Caco-2 (cell line): ENCODE measurements at regions of chr19 and their contacts with region 1.

Region 1: DNA sequence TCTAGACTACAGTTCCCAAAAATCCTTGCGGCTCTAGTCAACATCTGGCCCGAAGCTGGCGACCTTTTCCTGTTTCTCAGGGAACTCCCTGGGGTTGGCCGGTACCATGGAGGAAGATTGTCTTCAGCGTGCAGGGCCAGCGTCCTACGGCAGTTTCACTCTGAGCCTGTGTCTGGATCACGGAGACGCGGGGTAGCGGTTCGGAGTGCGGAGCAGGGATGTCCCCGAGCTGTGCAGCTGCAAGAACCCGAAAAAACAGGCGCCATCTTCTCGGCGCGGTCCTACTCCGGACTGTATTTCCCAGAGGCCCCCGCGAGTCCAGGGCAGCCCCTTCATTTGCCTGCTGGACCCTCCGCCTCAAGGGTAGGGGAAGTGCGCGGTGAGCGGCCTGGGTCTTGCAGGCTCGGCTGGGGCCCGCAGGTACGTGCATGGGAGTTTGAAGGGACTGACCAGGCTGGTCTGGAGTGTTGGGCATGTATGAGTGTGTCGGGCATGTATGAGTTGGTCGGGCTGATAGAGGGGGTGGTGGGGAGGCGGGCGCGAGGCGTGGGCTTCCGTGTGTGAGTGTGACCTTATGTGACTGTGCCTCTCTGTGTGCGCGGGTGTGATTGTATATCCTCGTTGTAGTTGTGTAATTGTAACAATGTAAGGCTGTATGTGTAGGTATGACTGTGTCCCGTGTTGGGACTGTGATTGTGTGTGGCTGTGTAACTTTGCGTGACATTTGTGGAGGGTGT is at the start of gene ZNF383:
- DNase-seq: peak; percentile 94 to 96
- H3K4me3 ChIP-seq: peak within 1 kb of the TSS; percentile 88
- H3K4me3 Mint-ChIP-seq: peak within 1 kb of the TSS; percentile 86
- H3K27ac Mint-ChIP-seq: peak within 1 kb of the TSS; percentile 92
- H3K4me1 ChIP-seq: no peaks in the 10 kb centered on the region
- H3K4me1 Mint-ChIP-seq: peaks cover 11% of the 10 kb centered on the region
- H3K27me3 ChIP-seq: no peaks in the 10 kb centered on the region
- H3K27me3 Mint-ChIP-seq: no peaks in the 10 kb centered on the region
- CTCF ChIP-seq: no peak
- total RNA-seq, gene ZNF383: 4.4 and 5.5 TPM in 2 replicates

Region 2: DNA sequence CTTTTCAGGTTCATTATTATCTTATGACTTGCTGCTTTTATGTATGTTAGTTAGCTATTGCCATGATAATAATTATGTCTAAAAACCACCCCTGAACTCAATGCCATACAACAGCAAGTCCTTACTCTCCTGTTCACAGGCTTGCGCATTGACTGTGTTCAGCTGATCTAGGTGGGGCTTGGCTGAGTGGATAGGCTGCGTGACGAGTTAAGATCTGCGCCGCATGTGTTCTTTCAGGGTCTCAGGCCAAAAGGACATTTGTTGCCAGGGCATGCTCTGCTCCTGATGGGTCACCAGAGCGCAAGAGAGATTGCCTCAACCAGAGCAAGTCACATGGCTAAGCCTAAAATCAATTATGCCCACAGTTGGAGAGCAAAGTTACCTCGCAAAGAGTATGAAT is 301.0 kb before region 1 on chr19:
- CTCF ChIA-PET with region 1: no interaction called
- POLR2A ChIA-PET with region 1: no interaction called
- intact Hi-C with region 1: no loop called
- DNase-seq: no peak
- H3K4me3 ChIP-seq: no peak overlapping the region
- H3K4me3 Mint-ChIP-seq: peak overlapping the region; percentile 69
- H3K27ac Mint-ChIP-seq: no peak overlapping the region
- H3K4me1 ChIP-seq: no peaks in the 10 kb centered on the region
- H3K4me1 Mint-ChIP-seq: no peaks in the 10 kb centered on the region
- H3K27me3 ChIP-seq: no peaks in the 10 kb centered on the region
- H3K27me3 Mint-ChIP-seq: no peaks in the 10 kb centered on the region
- CTCF ChIP-seq: no peak

Region 3: DNA sequence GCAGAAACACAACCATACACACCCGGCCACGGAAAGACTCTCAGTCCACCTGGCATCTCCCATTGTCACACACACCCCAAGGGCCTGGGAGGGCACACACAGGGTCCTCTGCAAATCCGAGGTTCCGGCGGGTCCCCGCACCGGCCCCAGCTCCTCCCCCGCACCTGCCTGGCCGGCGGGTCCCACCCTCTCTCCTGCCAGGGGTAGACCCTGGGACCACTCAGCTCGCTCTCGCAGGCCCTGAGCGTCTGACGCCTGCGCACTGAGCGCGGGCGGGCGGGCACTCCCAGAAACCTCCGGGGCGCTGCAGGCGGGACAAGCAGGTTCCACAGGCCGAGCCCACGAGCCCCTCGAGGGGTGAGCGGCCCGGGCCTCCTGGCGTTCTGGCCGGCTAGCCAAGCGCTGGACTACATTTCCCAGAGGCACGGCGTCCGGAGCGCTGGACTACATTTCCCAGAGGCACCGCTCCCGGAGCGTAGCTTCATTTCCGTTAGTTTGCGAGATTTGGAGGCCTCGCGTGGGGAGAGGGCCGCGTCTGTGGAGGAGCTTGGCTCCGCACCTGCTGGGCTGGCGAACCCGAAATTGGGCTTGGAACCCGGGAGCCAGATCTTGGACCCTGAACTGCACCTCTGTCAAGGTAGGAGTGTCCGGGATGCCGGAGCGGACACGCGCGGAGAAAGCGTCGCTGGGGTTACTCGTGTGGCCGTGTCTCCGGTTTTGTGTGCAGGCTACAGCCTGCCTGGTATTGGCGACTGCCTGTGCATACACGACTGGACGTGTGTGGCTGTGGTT is 139.9 kb before region 1 on chr19 and contains the start of gene ZNF420:
- CTCF ChIA-PET with region 1: no interaction called
- POLR2A ChIA-PET with region 1: interaction called, 3 read pairs
- intact Hi-C with region 1: loop called (anchors 1 kb)
- DNase-seq: peak; percentile 88 to 93
- H3K4me3 ChIP-seq: peak within 1 kb of the TSS; percentile 63
- H3K4me3 Mint-ChIP-seq: peak within 1 kb of the TSS; percentile 84
- H3K27ac Mint-ChIP-seq: peak within 1 kb of the TSS; percentile 83
- H3K4me1 ChIP-seq: no peaks in the 10 kb centered on the region
- H3K4me1 Mint-ChIP-seq: peaks cover 7% of the 10 kb centered on the region
- H3K27me3 ChIP-seq: no peaks in the 10 kb centered on the region
- H3K27me3 Mint-ChIP-seq: no peaks in the 10 kb centered on the region
- CTCF ChIP-seq: no peak
- total RNA-seq, gene ZNF420: 3.2 and 3.3 TPM in 2 replicates

Region 4: DNA sequence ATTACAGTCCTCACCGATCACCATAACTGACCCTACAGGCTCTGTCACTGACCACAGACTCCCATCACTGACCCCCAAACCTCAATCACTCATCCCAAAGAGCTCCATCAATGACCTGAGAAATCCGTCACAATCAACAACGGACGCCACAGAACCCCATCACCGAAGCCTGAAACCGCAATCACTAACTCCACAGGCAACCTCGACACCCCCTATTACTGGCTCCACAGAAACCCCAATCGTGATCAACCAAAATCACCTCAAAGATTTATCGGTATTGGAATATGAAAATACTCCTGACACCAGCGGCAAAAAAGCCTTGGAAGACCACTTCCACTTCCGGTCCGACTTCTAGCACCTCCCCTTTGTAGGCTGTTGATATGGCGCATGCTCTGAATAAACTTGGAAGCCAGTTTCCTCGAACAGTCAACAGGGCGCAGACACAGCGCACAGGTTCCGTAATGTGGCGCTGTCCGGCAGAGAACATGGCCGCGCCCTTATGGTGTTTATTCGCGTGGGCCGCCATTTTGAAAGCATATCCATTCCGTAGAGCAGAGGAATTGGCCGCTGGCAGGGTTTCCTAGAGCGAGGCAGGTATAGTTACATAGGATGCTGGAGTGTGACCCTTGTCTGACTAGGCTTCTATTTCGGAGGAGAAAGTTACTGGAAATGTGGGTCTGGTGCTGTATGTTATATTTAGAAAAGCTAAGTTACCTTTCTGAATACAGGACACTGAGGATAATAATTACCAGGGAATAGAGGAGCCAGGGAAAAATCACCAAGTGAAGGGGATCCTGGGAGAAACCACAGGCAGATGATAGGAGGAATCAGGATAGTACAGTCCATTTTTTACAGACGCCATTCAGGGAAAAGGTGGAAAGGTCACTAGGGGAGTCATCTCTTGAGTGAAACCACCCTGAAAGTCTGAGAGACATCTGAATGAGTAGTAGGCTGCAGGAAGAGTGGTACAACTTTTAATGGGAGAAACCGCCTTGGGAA is 45.4 kb before region 1 on chr19 and contains the start of gene ZNF585A:
- CTCF ChIA-PET with region 1: no interaction called
- POLR2A ChIA-PET with region 1: no interaction called
- intact Hi-C with region 1: loop called (anchors 1 kb)
- DNase-seq: peak; percentile 86 to 93
- H3K4me3 ChIP-seq: peak within 1 kb of the TSS; percentile 55
- H3K4me3 Mint-ChIP-seq: no peak within 1 kb of the TSS
- H3K27ac Mint-ChIP-seq: no peak within 1 kb of the TSS
- H3K4me1 ChIP-seq: no peaks in the 10 kb centered on the region
- H3K4me1 Mint-ChIP-seq: no peaks in the 10 kb centered on the region
- H3K27me3 ChIP-seq: no peaks in the 10 kb centered on the region
- H3K27me3 Mint-ChIP-seq: no peaks in the 10 kb centered on the region
- CTCF ChIP-seq: peak in 1 of 2 experiments; percentile 39
- total RNA-seq, gene ZNF585A: 4.3 and 7.3 TPM in 2 replicates